B cell (primary cell): ENCODE measurements at regions of chr16 and their contacts with region 1.

Region 1: DNA sequence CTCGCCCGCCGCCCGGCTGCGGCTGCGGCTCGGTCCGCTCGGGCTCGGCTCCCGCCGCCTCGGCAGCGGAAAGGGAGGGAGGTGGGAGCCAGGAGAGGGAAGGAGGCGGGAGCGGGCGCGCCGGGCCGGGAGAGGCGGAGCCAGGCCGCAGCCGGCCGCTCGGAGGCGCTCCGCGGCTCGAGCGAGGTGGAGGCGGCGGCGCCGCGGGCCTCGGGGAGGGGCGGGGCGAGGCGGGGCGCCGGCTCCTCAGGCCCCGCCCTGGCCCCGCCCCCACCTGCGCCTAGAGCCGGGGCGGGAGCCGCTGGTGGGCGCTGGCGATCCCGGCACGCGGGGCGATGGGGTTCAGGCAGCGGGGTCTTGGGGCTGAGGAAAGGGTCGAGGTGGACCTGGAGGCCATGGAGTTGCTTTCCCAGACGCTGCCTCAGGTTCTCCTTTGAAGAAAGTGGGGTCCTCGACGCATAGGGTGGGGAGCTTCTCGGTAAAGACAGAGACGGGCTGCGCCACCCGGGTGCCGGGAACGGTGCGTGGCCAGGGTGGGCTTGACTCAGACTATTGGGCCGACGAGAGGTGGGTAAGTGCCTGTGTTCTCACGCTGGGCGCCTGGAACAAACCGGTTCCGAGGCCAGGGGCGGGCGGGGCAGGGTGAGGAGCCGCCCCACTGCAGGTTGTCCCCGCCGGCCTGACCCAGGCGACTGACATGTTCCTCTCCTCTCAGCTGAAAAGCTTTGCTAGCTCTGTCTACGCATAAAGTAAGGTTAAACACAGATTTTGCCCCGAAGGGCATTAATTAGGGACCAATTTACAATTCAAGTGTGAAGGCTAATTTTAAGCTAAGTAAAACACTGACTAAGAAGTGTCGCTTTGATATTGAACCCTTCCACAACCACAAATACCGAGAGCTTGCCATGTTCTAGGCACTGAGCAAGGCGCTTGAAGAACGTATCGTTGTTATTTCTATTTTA is at the start of gene CMTM4:
- DNase-seq: peak; percentile 89
- ATAC-seq: peak; percentile 98
- H3K4me3 ChIP-seq: peak within 1 kb of the TSS; percentile 34 to 83 (median 57)
- H3K4me3 Mint-ChIP-seq: peak within 1 kb of the TSS; percentile 88
- H3K27ac ChIP-seq: no peak within 1 kb of the TSS
- H3K27ac Mint-ChIP-seq: peak within 1 kb of the TSS; percentile 15
- H3K4me1 ChIP-seq: peaks cover 15 to 17% of the 10 kb centered on the region in 2 donors
- H3K4me1 Mint-ChIP-seq: peaks cover 17% of the 10 kb centered on the region
- H3K27me3 ChIP-seq: peaks cover 0 to 53% (median 30%) of the 10 kb centered on the region in 4 experiments
- H3K27me3 Mint-ChIP-seq: peaks cover 30% of the 10 kb centered on the region
- CTCF ChIP-seq: peak; percentile 32
- total RNA-seq, gene CMTM4: 0.59 and 0.68 TPM in 2 replicates

Region 2: GRCh38 chr16:66677179-66677578 is 19.8 kb before region 1 on chr16:
- CTCF ChIA-PET with region 1: no interaction called
- POLR2A ChIA-PET with region 1: no interaction called
- intact Hi-C with region 1: no loop called
- DNase-seq: no peak
- ATAC-seq: no peak
- H3K4me3 ChIP-seq: no peak overlapping the region
- H3K4me3 Mint-ChIP-seq: no peak overlapping the region
- H3K27ac ChIP-seq: no peak overlapping the region
- H3K27ac Mint-ChIP-seq: peak overlapping the region; percentile 26
- H3K4me1 ChIP-seq: no peaks in the 10 kb centered on the region
- H3K4me1 Mint-ChIP-seq: no peaks in the 10 kb centered on the region
- H3K27me3 ChIP-seq: no peaks in the 10 kb centered on the region
- H3K27me3 Mint-ChIP-seq: no peaks in the 10 kb centered on the region
- CTCF ChIP-seq: no peak

Region 3: GRCh38 chr16:66714062-66714461 is 17.1 kb after region 1 on chr16:
- CTCF ChIA-PET with region 1: no interaction called
- POLR2A ChIA-PET with region 1: interaction called, 12 read pairs
- intact Hi-C with region 1: no loop called
- DNase-seq: no peak
- ATAC-seq: no peak
- H3K4me3 ChIP-seq: no peak overlapping the region
- H3K4me3 Mint-ChIP-seq: no peak overlapping the region
- H3K27ac ChIP-seq: no peak overlapping the region
- H3K27ac Mint-ChIP-seq: no peak overlapping the region
- H3K4me1 ChIP-seq: no peaks in the 10 kb centered on the region
- H3K4me1 Mint-ChIP-seq: no peaks in the 10 kb centered on the region
- H3K27me3 ChIP-seq: no peaks in the 10 kb centered on the region
- H3K27me3 Mint-ChIP-seq: peaks cover 8% of the 10 kb centered on the region
- CTCF ChIP-seq: no peak

Region 4: GRCh38 chr16:67028555-67029248 is 331.8 kb after region 1 on chr16 and contains the start of gene CBFB:
- CTCF ChIA-PET with region 1: no interaction called
- POLR2A ChIA-PET with region 1: no interaction called
- intact Hi-C with region 1: no loop called
- DNase-seq: peak; percentile 97
- ATAC-seq: peak; percentile 83
- H3K4me3 ChIP-seq: peak within 1 kb of the TSS; percentile 69 to 82 (median 76)
- H3K4me3 Mint-ChIP-seq: peak within 1 kb of the TSS; percentile 94
- H3K27ac ChIP-seq: peak within 1 kb of the TSS; percentile 96 to 98
- H3K27ac Mint-ChIP-seq: peak within 1 kb of the TSS; percentile 94
- H3K4me1 ChIP-seq: peaks cover 13 to 18% of the 10 kb centered on the region in 2 donors
- H3K4me1 Mint-ChIP-seq: peaks cover 40% of the 10 kb centered on the region
- H3K27me3 ChIP-seq: no peaks in the 10 kb centered on the region
- H3K27me3 Mint-ChIP-seq: no peaks in the 10 kb centered on the region
- CTCF ChIP-seq: peak; percentile 21
- total RNA-seq, gene CBFB: 89.0 and 101 TPM in 2 replicates